ENCODE measurements at regions of chr1 and their contacts with region 1.

Region 1: GRCh38 chr1:11784993-11785769 is 20.6 kb downstream of the MTHFR start:
- DNase-seq: peak; percentile 69 to 79
- ATAC-seq: peak; percentile 50 to 68 (median 61)
- H3K4me3 ChIP-seq: peak overlapping the region in 9 of 10 donors; percentile 12 to 51 (median 40)
- H3K27ac ChIP-seq: peak overlapping the region; percentile 31 to 99 (median 85)
- H3K4me1 ChIP-seq: peaks cover 42 to 62% (median 58%) of the 10 kb centered on the region in 9 donors
- H3K27me3 ChIP-seq: no peaks in the 10 kb centered on the region
- CTCF ChIP-seq: peak; percentile 75 to 95 (median 91)

Region 2: DNA sequence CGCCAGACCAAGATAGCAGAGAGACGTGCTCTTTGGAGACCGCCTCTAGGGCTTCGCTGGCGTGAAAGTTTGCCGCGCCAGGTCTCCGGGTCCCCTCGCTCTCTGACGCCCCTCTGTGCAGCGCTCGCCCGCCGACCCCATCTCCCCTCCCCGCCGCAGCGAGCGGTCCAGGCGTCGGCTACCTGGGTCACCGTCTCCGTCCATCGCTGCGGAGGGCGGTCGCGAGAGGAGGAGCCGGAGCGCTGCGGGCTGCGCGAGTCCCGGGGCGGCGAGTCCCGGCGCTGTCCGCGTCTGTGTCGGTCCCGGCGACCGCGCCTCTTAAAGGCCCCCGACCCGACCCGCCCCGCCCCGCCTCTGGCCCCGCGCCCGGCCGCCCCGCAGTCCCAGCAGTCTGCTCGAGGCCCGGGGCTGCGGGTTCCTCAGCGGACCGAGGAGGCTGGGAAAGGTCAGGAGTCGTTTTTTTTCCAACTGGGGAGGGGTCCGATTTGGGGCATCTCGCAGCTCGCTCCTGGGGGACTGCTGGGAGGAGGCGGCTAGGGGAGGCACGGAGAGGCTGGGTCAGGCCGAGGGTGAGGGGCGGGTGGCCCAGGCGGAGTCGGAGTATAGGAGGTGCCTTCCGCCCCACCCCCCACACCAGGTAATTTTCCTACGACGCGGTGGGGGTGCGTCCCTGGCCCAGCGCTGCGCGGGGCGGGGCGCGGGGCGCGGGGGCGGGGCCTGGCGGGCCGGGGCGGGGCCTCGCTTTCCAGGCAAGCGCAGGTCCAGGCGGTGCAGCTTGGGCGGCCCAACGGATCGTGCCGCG is 130.8 kb before region 1 on chr1 and contains the starts of genes FBXO2 and FBXO44:
- intact Hi-C with region 1: no loop called
- DNase-seq: peak; percentile 34 to 61
- ATAC-seq: peak; percentile 23 to 82 (median 58)
- H3K4me3 ChIP-seq: peak within 1 kb of the TSS; percentile 33 to 77 (median 66)
- H3K27ac ChIP-seq: peak within 1 kb of the TSS in 5 of 10 donors; percentile 15 to 66 (median 50)
- H3K4me1 ChIP-seq: peaks cover 4 to 34% (median 20%) of the 10 kb centered on the region in 9 donors
- H3K27me3 ChIP-seq: peaks cover 3 to 42% (median 15%) of the 10 kb centered on the region in 7 donors
- CTCF ChIP-seq: no peak
- total RNA-seq, gene FBXO2: 0.70 to 5.5 (median 1.7) TPM
- total RNA-seq, gene FBXO44: 10.1 to 17.7 (median 15.8) TPM

Region 3: GRCh38 chr1:11691302-11691914 is 93.8 kb before region 1 on chr1 and contains the start of gene DRAXIN:
- intact Hi-C with region 1: no loop called
- DNase-seq: no peak
- ATAC-seq: peak in 3 of 8 donors; percentile 18 to 25 (median 18)
- H3K4me3 ChIP-seq: peak within 1 kb of the TSS in 9 of 10 donors; percentile 16 to 47 (median 30)
- H3K27ac ChIP-seq: no peak within 1 kb of the TSS
- H3K4me1 ChIP-seq: peaks cover 0 to 29% (median 10%) of the 10 kb centered on the region in 9 donors
- H3K27me3 ChIP-seq: peaks cover 23 to 92% (median 83%) of the 10 kb centered on the region in 7 donors
- CTCF ChIP-seq: no peak
- total RNA-seq, gene DRAXIN: 0.05 to 0.18 (median 0.12) TPM in 8 of 10 donors, not detected in the others

Region 4: DNA sequence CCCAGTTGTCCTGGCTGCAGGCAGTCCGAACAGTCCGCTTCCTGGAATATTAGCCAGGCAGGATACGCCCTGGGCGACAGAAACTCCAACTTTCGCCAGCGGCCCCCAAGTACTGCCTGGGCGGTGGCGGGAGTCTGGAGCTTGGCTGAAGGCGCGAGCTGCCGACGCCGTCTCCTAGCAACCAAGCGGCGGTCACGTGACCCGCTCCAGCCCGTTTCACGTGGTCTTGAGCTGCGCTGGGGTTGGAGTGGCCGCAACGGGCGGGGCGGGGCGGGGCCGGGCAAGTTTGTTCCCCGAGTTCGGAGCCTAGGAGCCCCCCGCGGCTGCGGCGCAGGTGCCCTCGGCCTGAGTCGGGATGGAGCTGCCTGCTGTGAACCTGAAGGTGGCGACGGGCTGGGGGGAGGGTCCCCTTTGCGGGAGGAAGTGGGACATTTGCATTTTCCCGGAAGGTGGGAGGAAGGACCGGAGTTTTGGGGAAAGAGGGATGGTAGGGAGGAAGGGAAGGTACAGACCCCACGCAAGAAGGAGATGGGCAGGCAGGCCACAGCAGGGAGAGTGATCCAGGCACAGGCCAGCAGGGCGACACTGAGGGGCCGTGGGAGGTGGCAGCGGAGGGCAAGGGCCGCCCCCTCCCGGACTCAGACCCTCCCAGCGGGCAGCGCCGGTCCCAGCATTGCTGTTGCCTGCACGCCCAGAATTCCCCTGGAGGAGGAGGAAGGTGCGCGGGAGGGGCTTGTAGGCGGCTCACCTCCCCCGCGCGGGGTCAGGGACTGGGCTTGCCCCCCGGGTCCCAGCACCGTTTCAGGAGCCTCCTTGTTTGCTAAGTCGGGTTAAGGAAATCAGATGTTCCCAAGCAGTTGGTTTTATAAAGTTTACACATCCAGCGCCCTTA is 49.1 kb before region 1 on chr1 and contains the start of gene AGTRAP:
- intact Hi-C with region 1: loop called in 2 of 10 experiments (anchors 5 kb)
- DNase-seq: peak; percentile 97 to 98
- ATAC-seq: peak; percentile 83 to 94 (median 92)
- H3K4me3 ChIP-seq: peak within 1 kb of the TSS; percentile 36 to 99 (median 84)
- H3K27ac ChIP-seq: peak within 1 kb of the TSS; percentile 41 to 97 (median 88)
- H3K4me1 ChIP-seq: peaks cover 6 to 75% (median 36%) of the 10 kb centered on the region in 9 donors
- H3K27me3 ChIP-seq: no peaks in the 10 kb centered on the region
- CTCF ChIP-seq: peak in 2 of 9 donors; percentile 17 to 28
- total RNA-seq, gene AGTRAP: 12.9 to 37.9 (median 16.9) TPM